GM12878 (cell line): ENCODE measurements at regions of chr15 and their contacts with region 1.

Region 1: DNA sequence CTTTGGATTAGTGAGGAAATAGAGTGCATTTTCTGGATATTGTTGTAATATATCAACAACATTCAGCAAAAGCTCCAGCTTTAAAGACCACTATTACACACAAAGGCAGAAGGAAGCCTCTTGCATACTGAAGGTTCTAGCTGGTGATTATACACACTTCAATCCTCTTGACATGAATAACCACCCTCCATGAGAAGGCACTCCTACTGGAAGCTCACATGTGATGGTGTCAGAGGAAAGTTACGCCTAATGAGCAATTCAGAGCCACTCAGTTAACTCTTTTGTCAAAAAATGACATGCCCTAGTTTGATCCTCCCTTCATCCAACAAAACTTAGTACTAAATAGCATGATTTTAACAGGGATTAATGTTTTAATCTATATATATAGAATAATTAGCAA is 124.6 kb upstream of the LYSMD4 start:
- DNase-seq: no peak
- ATAC-seq: no peak
- H3K4me3 ChIP-seq: no peak overlapping the region
- H3K27ac ChIP-seq: no peak overlapping the region
- H3K4me1 ChIP-seq: no peaks in the 10 kb centered on the region
- H3K27me3 ChIP-seq: no peaks in the 10 kb centered on the region
- CTCF ChIP-seq: no peak
- EP300 ChIP-seq: no peak
- POLR2A ChIP-seq: no peak
- RAD21 ChIP-seq: no peak

Region 2: GRCh38 chr15:99909592-99910295 is 51.9 kb after region 1 on chr15:
- CTCF ChIA-PET with region 1: no interaction called
- POLR2A ChIA-PET with region 1: no interaction called
- RAD21 ChIA-PET with region 1: no interaction called
- SMC1A ChIA-PET with region 1: no interaction called
- in situ Hi-C with region 1: no loop called
- intact Hi-C with region 1: loop called (anchors 10 kb)
- DNase-seq: no peak
- ATAC-seq: peak; percentile 75
- H3K4me3 ChIP-seq: no peak overlapping the region
- H3K27ac ChIP-seq: no peak overlapping the region
- H3K4me1 ChIP-seq: no peaks in the 10 kb centered on the region
- H3K27me3 ChIP-seq: no peaks in the 10 kb centered on the region
- CTCF ChIP-seq: peak; percentile 35 to 46 (median 37); a peak in 4 of 6 replicates
- EP300 ChIP-seq: no peak
- POLR2A ChIP-seq: no peak
- RAD21 ChIP-seq: peak; percentile 64